ENCODE measurements at regions of chr2 and their contacts with region 1.

Region 1: DNA sequence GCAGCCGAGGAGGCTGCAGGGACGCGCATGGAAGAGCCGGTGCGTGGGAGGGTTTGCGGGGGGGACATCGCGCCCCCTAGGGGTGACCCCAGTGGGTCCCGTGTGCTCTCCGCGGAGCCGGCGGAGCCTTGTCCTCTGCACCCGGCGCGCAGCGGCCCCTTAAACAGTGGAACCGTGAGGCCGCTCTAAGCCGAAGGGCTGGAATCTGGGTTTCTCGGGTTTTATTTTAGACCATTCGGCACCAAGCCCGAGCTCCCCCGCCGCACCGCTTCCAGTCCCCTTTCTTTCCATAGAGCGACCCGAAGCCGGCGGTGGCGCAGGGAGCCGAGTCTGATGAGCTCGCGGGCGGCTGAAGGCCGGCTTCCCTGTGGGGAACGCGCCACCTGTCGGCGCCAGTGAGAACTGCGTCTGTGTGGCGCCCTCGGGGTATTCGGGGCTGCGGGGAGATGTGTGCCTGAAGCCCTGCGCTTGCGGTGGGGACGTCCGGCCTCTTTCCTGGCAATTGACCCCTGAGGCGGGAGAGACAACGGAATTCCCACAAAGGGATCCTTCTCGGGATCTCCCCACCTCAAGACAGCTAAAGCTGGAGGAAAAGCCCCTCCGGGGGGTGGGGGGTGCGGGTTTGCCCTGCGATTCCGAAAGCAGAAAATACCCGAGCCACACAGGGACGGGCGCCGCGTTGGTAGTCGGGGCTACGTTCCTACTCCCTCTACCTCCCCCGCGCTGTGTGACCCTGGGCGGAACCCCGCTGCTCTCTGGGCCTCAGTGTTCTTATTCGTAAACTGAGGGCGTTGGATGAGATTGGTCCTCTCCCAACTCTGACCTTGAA is 8.2 kb upstream of the EN1 start:
- DNase-seq: peak; percentile 52 to 86 (median 72)
- ATAC-seq: peak; percentile 83 to 90 (median 86)
- H3K4me3 ChIP-seq: peak overlapping the region; percentile 16 to 69
- H3K4me3 Mint-ChIP-seq: peak overlapping the region; percentile 62 to 70 (median 63)
- H3K27ac ChIP-seq: no peak overlapping the region
- H3K27ac Mint-ChIP-seq: peak overlapping the region in 1 of 2 donors; percentile 31
- H3K4me1 ChIP-seq: peaks cover 0 to 45% of the 10 kb centered on the region in 2 experiments
- H3K4me1 Mint-ChIP-seq: peaks cover 30 to 35% (median 34%) of the 10 kb centered on the region in 3 donors
- H3K27me3 ChIP-seq: peaks cover 39 to 96% of the 10 kb centered on the region in 2 experiments
- H3K27me3 Mint-ChIP-seq: peaks cover 60 to 89% of the 10 kb centered on the region in 2 donors

Region 2: DNA sequence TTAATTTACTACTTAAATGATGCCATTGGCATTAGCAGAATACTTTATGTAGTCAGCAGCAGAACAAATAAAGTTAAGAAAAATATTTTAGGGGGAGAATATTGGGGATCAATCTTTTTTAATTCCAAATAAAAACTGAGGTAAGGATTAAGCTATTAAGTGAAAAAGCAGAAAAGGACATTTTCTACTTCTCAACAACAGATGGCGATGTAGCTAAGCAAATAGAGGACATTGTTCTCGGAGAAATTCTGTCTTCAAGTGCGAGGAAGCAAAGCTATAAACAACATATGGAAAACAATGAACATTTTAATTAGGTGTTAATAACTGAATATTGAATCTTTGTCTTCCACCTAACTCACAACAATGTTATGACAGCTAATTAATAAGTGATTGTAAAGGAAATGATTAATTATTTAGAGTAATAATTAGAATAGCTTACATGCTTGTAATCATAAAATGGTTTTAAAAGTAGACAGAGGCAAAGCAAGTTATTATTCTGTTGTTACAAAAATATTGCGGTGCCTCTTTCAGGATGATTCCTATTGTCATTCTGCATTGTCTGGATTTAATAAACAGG is 808.9 kb before region 1 on chr2:
- CTCF ChIA-PET with region 1: interaction called, 9 to 33 read pairs
- POLR2A ChIA-PET with region 1: no interaction called
- DNase-seq: peak in 1 of 35 experiments; percentile 56
- ATAC-seq: no peak
- H3K4me3 ChIP-seq: no peak overlapping the region
- H3K4me3 Mint-ChIP-seq: no peak overlapping the region
- H3K27ac ChIP-seq: no peak overlapping the region
- H3K27ac Mint-ChIP-seq: no peak overlapping the region
- H3K4me1 ChIP-seq: no peaks in the 10 kb centered on the region
- H3K4me1 Mint-ChIP-seq: peaks cover 0 to 6% (median 0%) of the 10 kb centered on the region in 3 donors
- H3K27me3 ChIP-seq: peaks cover 4 to 5% of the 10 kb centered on the region in 2 experiments
- H3K27me3 Mint-ChIP-seq: peaks cover 56 to 71% of the 10 kb centered on the region in 2 donors

Region 3: DNA sequence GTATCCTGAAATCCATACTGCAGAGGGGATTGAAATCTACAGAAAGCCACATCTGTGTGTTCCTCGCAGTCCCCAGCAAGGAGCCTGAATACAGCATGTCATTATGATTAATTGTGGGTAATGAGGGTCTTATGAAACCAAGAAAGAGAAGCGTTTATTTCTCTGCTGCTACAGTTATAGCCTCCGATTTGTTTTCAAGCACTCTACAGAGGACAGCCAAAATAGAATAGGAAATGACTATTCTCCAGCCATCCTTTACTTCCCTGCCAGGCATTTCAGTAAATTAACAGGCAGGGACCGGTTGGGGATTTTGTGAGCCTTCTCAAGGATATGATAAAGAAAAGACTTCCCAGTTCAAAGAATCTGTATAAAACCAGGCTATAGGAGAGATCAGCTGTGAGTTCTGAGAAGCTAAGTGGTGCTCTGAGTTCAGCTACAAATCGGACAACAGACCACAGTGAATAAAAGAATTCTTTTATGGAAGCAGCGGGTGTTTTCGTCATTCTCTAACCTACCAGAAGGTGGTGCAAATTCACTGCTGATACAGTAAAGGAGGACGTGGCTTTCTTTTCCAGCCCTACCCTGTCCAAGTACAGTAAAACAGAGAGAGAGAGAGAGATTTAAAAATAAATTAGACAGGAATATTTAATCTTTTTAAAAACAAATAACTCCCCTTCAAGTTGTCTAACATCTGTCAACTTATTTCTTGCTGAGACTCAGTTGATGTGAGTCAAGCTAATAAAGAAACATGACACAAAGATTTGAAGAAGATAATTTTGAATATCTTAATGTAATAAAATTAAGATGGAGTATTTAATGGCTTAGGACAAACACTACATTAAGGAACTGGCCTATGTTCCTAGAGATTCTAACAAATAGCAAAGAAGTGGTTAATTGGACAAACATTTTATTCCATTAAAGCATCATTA is 633.7 kb before region 1 on chr2:
- CTCF ChIA-PET with region 1: interaction called, 14 to 30 read pairs
- POLR2A ChIA-PET with region 1: no interaction called
- DNase-seq: peak in 15 of 35 experiments; percentile 6 to 76 (median 19)
- ATAC-seq: peak; percentile 58 to 67 (median 65)
- H3K4me3 ChIP-seq: no peak overlapping the region
- H3K4me3 Mint-ChIP-seq: peak overlapping the region in 1 of 3 donors; percentile 87
- H3K27ac ChIP-seq: no peak overlapping the region
- H3K27ac Mint-ChIP-seq: no peak overlapping the region
- H3K4me1 ChIP-seq: peaks cover 9 to 17% of the 10 kb centered on the region in 2 experiments
- H3K4me1 Mint-ChIP-seq: peaks cover 21 to 29% (median 28%) of the 10 kb centered on the region in 3 donors
- H3K27me3 ChIP-seq: peaks cover 17 to 33% of the 10 kb centered on the region in 2 experiments
- H3K27me3 Mint-ChIP-seq: peaks cover 46 to 69% of the 10 kb centered on the region in 2 donors